PC-3 (cell line): ENCODE measurements at regions of chr10 and their contacts with region 1.

Region 1: DNA sequence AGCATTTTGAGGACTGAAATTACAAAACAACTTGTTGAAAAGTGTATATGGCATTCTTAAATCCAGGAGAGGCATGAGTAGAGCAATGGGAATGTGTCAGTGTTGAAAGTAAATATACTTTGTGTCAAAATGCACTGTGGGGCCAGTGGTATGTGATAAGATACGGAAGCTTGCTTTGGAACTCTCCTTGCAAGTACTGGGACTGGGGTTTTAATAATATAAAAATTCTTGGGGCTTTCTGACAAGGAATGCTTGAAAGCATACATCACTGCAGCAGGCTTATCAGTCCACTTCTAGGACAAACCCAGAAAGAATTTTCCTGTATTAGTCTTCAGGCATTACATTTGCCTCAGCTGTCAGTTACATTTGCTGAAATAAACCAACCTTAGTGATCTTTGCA is 472.8 kb upstream of the FZD8 start:
- DNase-seq: peak; percentile 90
- ATAC-seq: peak; percentile 96
- H3K4me3 ChIP-seq: no peak overlapping the region
- H3K27ac ChIP-seq: no peak overlapping the region
- H3K4me1 ChIP-seq: peaks cover 15% of the 10 kb centered on the region
- H3K27me3 ChIP-seq: no peaks in the 10 kb centered on the region
- CTCF ChIP-seq: no peak

Region 2: GRCh38 chr10:35789996-35790395 is 324.9 kb before region 1 on chr10:
- CTCF ChIA-PET with region 1: no interaction called
- POLR2A ChIA-PET with region 1: no interaction called
- intact Hi-C with region 1: loop called (anchors 5 kb)
- DNase-seq: peak; percentile 100
- ATAC-seq: peak; percentile 98
- H3K4me3 ChIP-seq: peak overlapping the region; percentile 5
- H3K27ac ChIP-seq: peak overlapping the region; percentile 85
- H3K4me1 ChIP-seq: peaks cover 40% of the 10 kb centered on the region
- H3K27me3 ChIP-seq: no peaks in the 10 kb centered on the region
- CTCF ChIP-seq: no peak

Region 3: GRCh38 chr10:36181401-36181800 is 66.5 kb after region 1 on chr10:
- CTCF ChIA-PET with region 1: no interaction called
- POLR2A ChIA-PET with region 1: no interaction called
- intact Hi-C with region 1: no loop called
- DNase-seq: peak; percentile 73
- ATAC-seq: peak; percentile 69
- H3K4me3 ChIP-seq: no peak overlapping the region
- H3K27ac ChIP-seq: no peak overlapping the region
- H3K4me1 ChIP-seq: peaks cover 9% of the 10 kb centered on the region
- H3K27me3 ChIP-seq: no peaks in the 10 kb centered on the region
- CTCF ChIP-seq: no peak

Region 4: GRCh38 chr10:36349445-36350078 is 234.6 kb after region 1 on chr10:
- CTCF ChIA-PET with region 1: no interaction called
- POLR2A ChIA-PET with region 1: no interaction called
- intact Hi-C with region 1: no loop called
- DNase-seq: no peak
- ATAC-seq: 0 out of 2 replicates have a peak, but pooled peaks have one; percentile 26
- H3K4me3 ChIP-seq: no peak overlapping the region
- H3K27ac ChIP-seq: no peak overlapping the region
- H3K4me1 ChIP-seq: peaks cover 14% of the 10 kb centered on the region
- H3K27me3 ChIP-seq: no peaks in the 10 kb centered on the region
- CTCF ChIP-seq: no peak